ENCODE measurements at regions of chr5 and their contacts with region 1.

Region 1: GRCh38 chr5:143824851-143825720 is 13.1 kb downstream of the HMHB1 start:
- DNase-seq: peak; percentile 84 to 89
- ATAC-seq: peak; percentile 91
- H3K4me3 ChIP-seq: no peak overlapping the region
- H3K27ac ChIP-seq: no peak overlapping the region
- H3K4me1 ChIP-seq: no peaks in the 10 kb centered on the region
- H3K27me3 ChIP-seq: no peaks in the 10 kb centered on the region

Region 2: DNA sequence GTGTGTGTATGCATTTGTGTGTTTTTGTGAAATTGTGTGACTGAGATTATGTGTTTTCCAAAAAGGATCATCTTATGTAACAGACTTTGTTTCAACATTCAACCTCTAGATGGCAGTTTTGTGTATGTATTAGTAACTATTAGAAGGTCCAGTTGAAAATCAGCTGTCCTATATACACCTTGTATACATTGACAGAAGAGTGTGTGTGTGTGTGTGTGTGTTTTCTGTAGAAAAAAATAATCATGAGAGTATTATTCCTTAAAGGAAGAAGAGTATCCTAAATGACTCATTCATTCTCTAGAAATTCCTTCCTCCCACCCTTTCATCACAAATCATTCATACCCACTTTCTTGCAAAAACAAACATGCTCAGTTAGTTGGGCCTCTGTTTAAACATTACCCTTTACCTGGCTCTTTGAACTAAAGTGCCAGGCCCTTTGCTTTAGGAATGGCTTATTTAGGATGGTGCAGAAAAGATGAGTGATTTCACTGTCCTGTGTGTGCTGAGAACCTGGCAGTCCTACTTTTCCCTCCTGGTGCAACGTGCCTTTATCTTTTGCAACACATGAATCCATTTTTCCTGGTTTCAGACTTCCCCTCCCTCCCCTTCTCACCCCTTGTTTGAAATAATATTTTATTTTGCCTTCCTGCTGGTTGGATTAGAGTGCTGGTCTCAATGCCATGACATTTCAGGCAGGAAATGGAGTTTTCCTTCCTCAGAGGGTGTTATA is 902.7 kb before region 1 on chr5:
- intact Hi-C with region 1: loop called (anchors 5 kb)
- DNase-seq: no peak
- ATAC-seq: peak; percentile 75
- H3K4me3 ChIP-seq: no peak overlapping the region
- H3K27ac ChIP-seq: no peak overlapping the region
- H3K4me1 ChIP-seq: peaks cover 0 to 2% of the 10 kb centered on the region in 2 donors
- H3K27me3 ChIP-seq: no peaks in the 10 kb centered on the region

Region 3: DNA sequence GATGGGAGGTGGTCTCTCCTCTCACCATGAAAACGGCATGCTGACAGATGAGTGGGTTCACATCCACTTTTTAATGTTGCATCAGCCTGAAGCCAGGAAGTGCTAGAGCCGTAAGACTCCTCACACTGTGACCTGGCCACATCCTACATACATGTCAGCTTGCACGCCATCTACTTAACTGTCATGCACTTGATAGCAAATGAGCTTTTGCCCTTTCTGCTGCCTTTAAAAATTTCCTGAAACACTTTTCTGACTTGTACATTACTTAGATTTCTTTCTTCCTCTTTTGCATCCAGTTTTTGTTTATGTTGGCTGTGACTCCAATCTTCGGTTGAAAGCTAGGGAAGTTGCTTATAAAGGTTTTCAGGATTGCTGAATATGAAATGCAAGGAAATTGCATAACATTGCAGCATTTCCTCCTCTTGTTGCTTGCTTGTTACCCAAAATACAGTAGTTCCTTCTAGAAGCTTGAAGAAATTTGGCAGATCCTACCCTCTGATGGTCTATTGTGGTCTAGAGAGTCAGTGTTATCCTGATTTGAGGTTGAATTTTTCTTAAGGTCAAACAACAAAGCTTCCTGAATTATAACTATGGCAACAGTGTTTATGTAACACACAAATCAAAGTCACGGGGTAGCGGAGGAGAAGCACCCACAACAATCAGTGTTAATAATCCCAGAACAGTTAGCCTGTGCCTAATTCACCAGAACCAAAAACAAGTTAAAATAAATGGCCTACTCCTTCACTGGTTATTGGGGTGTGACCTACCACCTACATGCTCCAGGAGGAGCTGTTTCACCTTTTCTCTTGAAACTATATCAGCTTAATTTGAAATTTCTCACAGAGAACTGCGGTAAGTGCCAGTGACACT is 822.4 kb before region 1 on chr5:
- intact Hi-C with region 1: loop called in 1 of 2 experiments (anchors 10 kb)
- DNase-seq: peak in 1 of 2 donors; percentile 67
- ATAC-seq: peak; percentile 74
- H3K4me3 ChIP-seq: no peak overlapping the region
- H3K27ac ChIP-seq: peak overlapping the region in 1 of 2 donors; percentile 63
- H3K4me1 ChIP-seq: peaks cover 4 to 6% of the 10 kb centered on the region in 2 donors
- H3K27me3 ChIP-seq: no peaks in the 10 kb centered on the region